A549 (cell line): ENCODE measurements at regions of chr11 and their contacts with region 1.

Region 1: DNA sequence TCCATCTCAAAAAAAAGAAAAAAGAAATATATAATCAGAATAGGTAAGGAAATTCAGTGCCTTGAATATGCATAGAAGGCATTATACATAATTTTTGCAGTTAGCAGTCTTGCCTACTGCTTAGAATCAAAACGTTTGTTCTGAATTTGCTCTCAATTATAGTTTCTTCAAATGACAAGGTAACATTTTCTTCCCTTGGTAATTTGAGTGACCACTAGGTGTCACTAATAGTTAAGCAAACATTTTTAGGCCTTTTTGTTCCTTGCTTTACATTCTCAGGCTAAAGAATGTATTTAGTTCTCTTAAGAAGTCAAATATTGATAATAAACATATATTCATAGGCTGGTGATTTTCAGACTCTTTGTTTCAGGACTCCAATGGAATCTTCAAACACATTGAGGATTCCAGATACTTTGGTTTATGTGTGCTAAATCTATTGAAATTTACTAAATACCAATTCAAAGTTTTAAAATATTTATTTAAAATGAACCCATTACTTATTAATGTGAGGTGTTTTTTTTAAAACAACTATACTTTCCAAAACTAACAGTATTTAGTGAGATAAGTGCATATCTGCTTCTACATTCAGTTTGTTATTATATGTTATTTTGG is 55.0 kb upstream of the DEPDC7 start:
- DNase-seq: peak in 1 of 2 experiments; percentile 63
- ATAC-seq: peak in 1 of 2 experiments; percentile 64; a peak in 3 of 6 replicates
- H3K4me3 ChIP-seq: no peak overlapping the region
- H3K27ac ChIP-seq: no peak overlapping the region
- H3K4me1 ChIP-seq: peaks cover 4% of the 10 kb centered on the region; the same call in 1 of the 3 replicates
- CTCF ChIP-seq: peak; percentile 82
- EP300 ChIP-seq: no peak
- POLR2A ChIP-seq: no peak
- RAD21 ChIP-seq: peak; percentile 85 to 87

Region 2: GRCh38 chr11:32983506-32983905 is 22.8 kb after region 1 on chr11:
- CTCF ChIA-PET with region 1: interaction called, 12 read pairs
- POLR2A ChIA-PET with region 1: no interaction called
- DNase-seq: no peak
- ATAC-seq: no peak
- H3K4me3 ChIP-seq: no peak overlapping the region
- H3K27ac ChIP-seq: no peak overlapping the region
- H3K4me1 ChIP-seq: peaks cover 28% of the 10 kb centered on the region
- CTCF ChIP-seq: no peak
- EP300 ChIP-seq: no peak
- POLR2A ChIP-seq: no peak
- RAD21 ChIP-seq: no peak